Mammary epithelial cell (primary cell): ENCODE measurements at regions of chr21 and their contacts with region 1.

Region 1: GRCh38 chr21:36419996-36420395 is 34.8 kb downstream of the CHAF1B start:
- DNase-seq: peak; percentile 66
- H3K4me3 ChIP-seq: no peak overlapping the region
- H3K27ac ChIP-seq: no peak overlapping the region
- H3K4me1 ChIP-seq: no peaks in the 10 kb centered on the region
- H3K27me3 ChIP-seq: no peaks in the 10 kb centered on the region
- CTCF ChIP-seq: peak; percentile 80 to 84

Region 2: DNA sequence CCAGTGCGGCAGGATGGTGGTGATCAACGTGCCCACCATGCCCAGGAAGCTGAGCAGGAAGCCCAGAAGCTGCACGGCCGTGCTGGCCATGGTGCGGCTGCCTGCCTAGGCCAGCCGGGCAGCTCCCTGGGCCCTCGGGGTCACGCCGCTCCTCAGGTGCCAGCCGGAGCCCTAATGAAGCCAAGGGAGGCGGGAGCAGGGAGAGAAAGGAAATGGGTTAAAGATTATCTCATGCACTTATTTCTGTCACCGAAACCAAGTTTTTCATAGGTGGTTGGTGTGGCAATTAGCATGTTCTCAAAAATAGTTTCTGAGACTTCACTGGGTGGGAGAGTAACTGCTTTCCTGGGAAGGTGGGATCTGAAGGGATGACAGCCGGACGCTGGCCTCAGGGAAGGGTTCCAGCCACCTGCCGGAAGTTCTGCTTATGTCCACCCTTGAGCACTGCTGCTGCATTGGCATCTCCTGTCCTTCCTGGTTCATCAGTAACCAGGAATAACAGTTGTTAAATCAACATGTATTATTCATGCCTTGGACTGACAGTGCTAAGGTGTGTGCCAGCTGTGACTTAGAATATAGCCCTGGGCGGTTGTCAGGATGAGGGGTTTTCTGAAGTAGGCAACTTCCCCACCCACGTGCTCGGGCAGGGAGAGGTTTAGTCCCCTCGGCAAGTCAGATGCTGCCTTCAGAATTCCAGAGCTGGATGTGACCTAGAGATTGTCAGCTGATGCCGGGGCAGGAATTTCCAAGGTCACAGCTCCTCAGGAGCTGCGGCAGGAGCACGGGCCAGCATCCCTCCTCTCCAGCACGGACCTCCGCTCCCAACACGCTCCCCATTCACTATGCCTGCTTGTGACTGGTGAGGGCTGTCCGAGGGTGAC is 41.9 kb after region 1 on chr21:
- CTCF ChIA-PET with region 1: no interaction called
- dilution Hi-C with region 1: no loop called
- in situ Hi-C with region 1: no loop called
- intact Hi-C with region 1: loop called (anchors 5 kb)
- DNase-seq: peak; percentile 72
- H3K4me3 ChIP-seq: no peak overlapping the region
- H3K27ac ChIP-seq: no peak overlapping the region
- H3K4me1 ChIP-seq: peaks cover 12% of the 10 kb centered on the region
- H3K27me3 ChIP-seq: no peaks in the 10 kb centered on the region
- CTCF ChIP-seq: peak in 1 of 2 donors; percentile 2

Region 3: GRCh38 chr21:36589355-36589971 is 169.5 kb after region 1 on chr21:
- CTCF ChIA-PET with region 1: no interaction called
- dilution Hi-C with region 1: no loop called
- in situ Hi-C with region 1: no loop called
- intact Hi-C with region 1: loop called (anchors 1 kb)
- DNase-seq: no peak
- H3K4me3 ChIP-seq: no peak overlapping the region
- H3K27ac ChIP-seq: no peak overlapping the region
- H3K4me1 ChIP-seq: peaks cover 9% of the 10 kb centered on the region
- H3K27me3 ChIP-seq: peaks cover 1% of the 10 kb centered on the region
- CTCF ChIP-seq: peak; percentile 39 to 61

Region 4: DNA sequence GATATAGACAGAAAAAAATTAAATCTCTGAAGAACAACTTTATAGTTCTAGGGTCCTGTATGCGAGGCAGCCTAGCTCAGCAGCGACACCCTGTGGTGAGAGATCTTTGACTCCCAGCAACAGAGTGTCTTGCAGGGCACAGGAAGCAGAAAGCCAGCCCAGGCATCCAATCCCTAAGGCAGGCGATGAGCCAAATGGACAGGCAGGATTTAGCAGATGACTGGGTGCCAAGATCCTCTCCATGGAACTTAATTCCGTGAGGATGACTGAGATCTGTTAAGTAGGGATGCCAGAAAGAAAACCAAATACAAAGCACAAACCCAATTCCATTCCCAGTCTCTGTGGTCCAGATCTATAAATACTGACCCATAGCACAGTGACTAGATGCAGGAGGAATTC is 507.7 kb after region 1 on chr21:
- CTCF ChIA-PET with region 1: interaction called, 21 read pairs
- dilution Hi-C with region 1: loop called (anchors 10 kb)
- in situ Hi-C with region 1: loop called (anchors 10 to 25 kb)
- intact Hi-C with region 1: loop called (anchors 2 kb)
- DNase-seq: peak; percentile 60
- H3K4me3 ChIP-seq: no peak overlapping the region
- H3K27ac ChIP-seq: no peak overlapping the region
- H3K4me1 ChIP-seq: peaks cover 10% of the 10 kb centered on the region
- H3K27me3 ChIP-seq: no peaks in the 10 kb centered on the region
- CTCF ChIP-seq: peak; percentile 94 to 96

Region 5: DNA sequence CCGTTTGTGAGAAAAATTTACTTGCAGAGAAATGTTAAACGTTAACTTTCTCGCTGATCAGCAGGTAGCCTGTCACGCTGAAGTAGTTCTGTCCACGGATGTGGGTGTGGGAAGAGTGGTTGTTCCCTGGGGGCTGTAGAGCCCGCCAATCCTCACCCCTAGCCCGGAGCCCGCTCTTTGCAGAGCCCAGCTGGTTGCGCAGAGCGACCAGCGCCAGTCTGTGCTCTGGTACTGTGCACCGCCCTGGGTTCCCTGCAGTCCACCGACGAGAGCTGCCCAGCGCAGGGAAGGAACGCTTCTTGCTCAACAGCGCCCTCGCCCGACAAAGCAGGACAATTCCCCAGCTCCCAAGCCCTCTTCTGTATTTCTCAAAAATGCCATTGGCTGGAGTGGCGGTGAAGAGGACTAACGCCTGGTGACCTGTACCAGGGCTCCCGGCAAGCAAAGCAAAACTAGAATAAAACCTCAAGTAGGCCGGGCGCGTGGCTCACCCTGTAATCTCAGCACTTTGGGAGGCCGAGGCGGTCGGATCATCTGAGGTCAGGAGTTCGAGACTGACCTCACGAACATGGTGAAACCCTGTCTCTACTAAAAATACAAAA is 589.8 kb after region 1 on chr21:
- CTCF ChIA-PET with region 1: no interaction called
- dilution Hi-C with region 1: no loop called
- in situ Hi-C with region 1: no loop called
- intact Hi-C with region 1: loop called (anchors 5 kb)
- DNase-seq: peak; percentile 71
- H3K4me3 ChIP-seq: peak overlapping the region; percentile 32 to 41 (median 35)
- H3K27ac ChIP-seq: no peak overlapping the region
- H3K4me1 ChIP-seq: peaks cover 4% of the 10 kb centered on the region
- H3K27me3 ChIP-seq: no peaks in the 10 kb centered on the region
- CTCF ChIP-seq: peak; percentile 80 to 89